Prostate gland (tissue), 2 donors: ENCODE measurements at regions of chr2 and their contacts with region 1.

Region 1: DNA sequence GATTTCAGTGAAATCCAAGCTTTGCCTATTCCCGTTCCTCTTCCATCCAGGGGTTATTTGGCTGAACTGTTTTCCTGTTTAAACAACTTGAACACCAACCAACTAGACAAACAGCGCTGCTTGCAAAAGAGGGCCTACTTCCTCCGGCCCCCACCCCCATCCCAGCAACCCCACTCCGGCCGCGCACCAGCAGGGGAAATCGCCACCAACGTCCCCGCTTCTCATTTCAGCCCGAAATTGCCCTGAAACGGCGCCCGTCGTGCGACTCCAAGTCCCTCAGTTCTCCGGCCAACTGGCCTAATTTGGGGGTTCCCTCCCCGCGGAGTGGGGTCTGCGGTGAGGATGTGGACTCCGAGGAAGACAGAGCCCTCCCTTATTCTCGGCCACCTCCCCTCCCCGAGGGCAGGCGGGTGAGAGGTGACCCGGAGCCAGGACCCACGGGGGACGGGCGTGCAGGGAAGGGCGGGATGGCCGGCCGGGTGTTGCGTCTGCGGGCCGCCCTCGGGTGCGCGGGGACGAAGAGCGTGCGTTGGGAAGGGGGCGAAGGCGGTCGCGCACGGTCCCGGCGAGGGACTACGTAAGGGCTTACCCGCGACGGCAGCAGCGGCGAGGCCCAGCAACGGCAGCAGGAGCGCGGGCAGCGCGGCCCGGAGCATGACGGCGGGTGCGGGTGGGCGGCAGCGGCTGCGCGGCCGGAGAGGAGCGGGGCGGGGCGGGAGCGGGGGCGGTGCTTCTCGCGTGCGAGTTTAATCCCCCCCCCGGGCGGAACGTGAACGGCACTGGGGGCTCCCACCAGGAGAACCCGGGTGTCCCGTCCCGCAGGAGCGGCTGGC is at the start of gene CD302:
- DNase-seq: peak; percentile 43
- H3K4me3 ChIP-seq: peak within 1 kb of the TSS; percentile 50 to 68
- H3K27ac ChIP-seq: peak within 1 kb of the TSS; percentile 55 to 60
- H3K4me1 ChIP-seq: no peaks in the 10 kb centered on the region
- H3K27me3 ChIP-seq: no peaks in the 10 kb centered on the region
- CTCF ChIP-seq: no peak
- POLR2A ChIP-seq: no peak
- total RNA-seq, gene CD302: 39.3 to 40.4 TPM

Region 2: GRCh38 chr2:159615140-159615951 is 182.4 kb before region 1 on chr2:
- intact Hi-C with region 1: loop called (anchors 10 kb)
- DNase-seq: peak; percentile 94
- H3K4me3 ChIP-seq: peak overlapping the region; percentile 70 to 76
- H3K27ac ChIP-seq: peak overlapping the region; percentile 98 to 99
- H3K4me1 ChIP-seq: no peaks in the 10 kb centered on the region
- H3K27me3 ChIP-seq: no peaks in the 10 kb centered on the region
- CTCF ChIP-seq: no peak
- POLR2A ChIP-seq: peak; percentile 64

Region 3: DNA sequence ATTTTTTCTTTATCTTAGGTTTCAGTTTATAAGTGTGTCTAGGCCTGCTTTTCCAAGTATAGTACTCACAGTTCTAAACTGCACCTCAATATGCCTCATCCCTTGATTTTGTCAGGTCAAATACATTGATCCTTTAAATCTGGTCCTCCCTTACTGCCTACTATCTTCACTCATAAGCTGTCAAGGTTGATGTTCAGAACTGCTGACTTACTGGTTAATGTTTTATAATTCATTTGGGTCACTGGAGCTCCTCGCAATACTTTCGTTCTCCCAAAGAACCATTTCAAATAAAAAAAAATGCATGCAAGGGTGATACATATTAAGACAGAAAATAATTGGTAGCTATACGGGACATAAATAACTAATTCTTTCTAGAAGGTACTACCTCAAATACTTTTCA is 126.7 kb before region 1 on chr2:
- intact Hi-C with region 1: no loop called
- DNase-seq: no peak
- H3K4me3 ChIP-seq: no peak overlapping the region
- H3K27ac ChIP-seq: no peak overlapping the region
- H3K4me1 ChIP-seq: no peaks in the 10 kb centered on the region
- H3K27me3 ChIP-seq: no peaks in the 10 kb centered on the region
- CTCF ChIP-seq: no peak
- POLR2A ChIP-seq: no peak